ENCODE measurements at regions of chr9 and their contacts with region 1.

Region 1: DNA sequence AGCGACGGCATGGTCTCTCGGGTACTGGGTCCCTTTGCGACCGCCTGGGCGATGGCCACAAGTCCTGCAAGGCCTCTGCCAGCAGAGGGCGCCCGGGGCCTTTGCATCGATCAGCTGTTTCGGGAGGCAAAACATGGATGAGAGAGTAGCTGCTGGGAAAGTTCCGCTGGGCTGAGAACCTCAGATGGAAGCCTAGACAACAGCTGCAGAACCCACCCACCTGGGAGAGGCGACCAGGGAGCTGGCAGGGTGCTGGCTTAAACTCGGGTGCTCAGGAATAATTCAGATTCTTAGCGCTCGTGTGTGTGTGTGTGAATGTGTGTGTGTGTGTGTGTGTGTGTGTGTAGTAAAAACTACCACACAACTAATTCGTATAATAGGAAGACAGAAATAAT is 50.0 kb downstream of the TRIM32 start:
- DNase-seq: peak; percentile 86
- CTCF ChIP-seq: peak; percentile 92

Region 2: GRCh38 chr9:116855883-116856662 is 118.9 kb after region 1 on chr9:
- in situ Hi-C with region 1: loop called (anchors 10 kb)
- DNase-seq: no peak
- CTCF ChIP-seq: no peak

Region 3: DNA sequence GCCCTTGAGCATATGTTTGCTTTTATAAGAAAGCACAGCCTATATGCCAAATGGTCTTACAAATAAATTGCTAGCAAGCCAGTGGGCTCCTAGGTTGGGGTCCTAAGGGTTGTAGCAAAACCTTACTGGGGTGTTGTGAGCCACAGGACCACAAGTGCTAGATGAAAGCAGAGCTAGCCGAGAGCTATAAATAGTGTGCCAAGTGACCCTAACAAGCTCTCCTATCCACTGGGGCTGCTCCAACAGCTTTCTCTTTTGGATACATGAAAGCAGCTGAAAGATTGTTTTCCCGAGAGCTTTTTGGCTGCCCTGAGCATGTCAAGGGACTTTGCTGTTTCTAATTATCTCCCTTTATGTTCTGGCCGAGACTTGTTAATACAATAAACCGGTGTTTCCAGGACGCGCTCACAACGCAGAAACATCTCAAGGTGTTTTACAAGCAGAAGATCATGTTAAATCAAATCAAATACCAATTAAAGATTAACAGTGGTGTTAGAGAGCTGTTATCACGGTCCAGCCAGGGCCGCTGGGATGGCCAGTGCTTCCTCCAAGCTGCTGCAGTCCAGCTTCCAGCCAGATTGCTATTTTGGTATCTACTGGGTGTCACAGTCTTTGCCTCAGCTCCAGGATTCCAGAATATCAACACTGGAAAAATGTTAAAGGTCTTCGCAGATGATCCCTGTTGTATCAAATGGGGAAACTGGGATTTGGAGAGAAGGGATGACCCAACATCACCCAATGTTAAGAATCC is 326.7 kb after region 1 on chr9:
- in situ Hi-C with region 1: no loop called
- DNase-seq: no peak
- CTCF ChIP-seq: no peak

Region 4: GRCh38 chr9:117081641-117082317 is 344.6 kb after region 1 on chr9:
- in situ Hi-C with region 1: no loop called
- DNase-seq: no peak
- CTCF ChIP-seq: no peak

Region 5: DNA sequence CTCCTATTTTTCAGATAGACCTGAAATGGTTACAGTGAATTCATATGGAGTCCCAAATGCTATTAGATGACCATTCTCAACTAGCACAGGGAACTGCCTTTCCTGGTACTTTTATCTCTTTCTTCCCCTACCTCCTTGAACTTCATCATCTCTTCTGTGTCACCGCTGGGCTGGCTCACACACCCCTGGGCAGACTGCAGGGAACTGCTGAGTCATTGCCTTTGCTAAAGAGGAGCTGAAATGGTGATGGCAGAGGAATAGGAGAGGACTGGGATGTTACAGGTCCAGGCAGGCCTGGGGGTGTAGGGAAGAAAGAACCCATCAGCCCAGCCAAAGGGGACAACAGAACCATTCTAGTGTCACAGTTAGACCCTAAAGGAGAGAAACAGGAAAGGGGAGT is 355.4 kb after region 1 on chr9:
- in situ Hi-C with region 1: no loop called
- DNase-seq: no peak
- CTCF ChIP-seq: no peak

Region 6: DNA sequence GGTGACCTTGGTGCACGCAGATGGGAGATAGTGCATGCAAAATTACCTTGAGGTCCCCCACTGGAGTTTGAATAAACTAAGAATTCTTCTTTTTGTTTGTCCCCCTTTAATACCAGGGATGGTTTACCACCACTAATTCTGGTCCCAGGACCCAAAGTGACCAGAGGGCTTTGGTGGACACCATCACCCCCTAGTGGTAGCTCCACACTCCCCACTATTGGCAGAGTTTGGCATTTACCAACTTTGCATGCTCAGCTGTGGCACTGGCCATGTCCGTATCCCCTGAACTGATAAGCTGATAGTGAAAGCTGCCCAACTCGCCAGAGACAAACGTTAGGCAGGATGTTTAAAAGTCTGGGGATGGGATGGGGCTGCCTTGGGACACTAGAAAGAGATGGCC is 674.4 kb after region 1 on chr9:
- in situ Hi-C with region 1: loop called (anchors 25 kb)
- DNase-seq: peak; percentile 51
- CTCF ChIP-seq: peak; percentile 30

Measured in GM13976 (cell line).